ENCODE measurements at regions of chr12 and their contacts with region 1.

Region 1: GRCh38 chr12:93089805-93090569 is 160.9 kb upstream of the EEA1 start:
- DNase-seq: peak; percentile 50
- H3K4me3 ChIP-seq: no peak overlapping the region
- H3K27ac ChIP-seq: no peak overlapping the region
- H3K4me1 ChIP-seq: peaks cover 20% of the 10 kb centered on the region
- H3K27me3 ChIP-seq: no peaks in the 10 kb centered on the region
- CTCF ChIP-seq: no peak

Region 2: DNA sequence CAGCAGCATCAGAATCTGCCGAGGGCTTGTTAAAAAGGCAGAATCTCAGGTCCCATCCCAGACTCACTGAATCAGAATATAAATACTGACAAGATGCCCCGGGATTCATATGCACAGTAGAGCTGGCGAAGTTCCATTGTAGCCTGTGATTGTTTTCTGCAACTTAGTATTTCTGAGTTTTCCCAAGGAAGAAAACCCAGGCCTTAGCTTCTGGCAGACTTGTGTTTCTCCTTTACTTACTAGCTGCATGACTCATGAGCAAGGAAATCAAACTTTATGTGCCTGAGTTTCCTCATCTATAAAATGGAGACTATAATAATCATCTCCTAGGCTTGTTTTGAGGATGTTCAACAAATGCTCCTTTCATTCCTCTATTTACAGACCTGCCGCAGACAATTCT is 665.6 kb before region 1 on chr12:
- CTCF ChIA-PET with region 1: no interaction called
- POLR2A ChIA-PET with region 1: no interaction called
- intact Hi-C with region 1: no loop called
- DNase-seq: peak; percentile 47
- H3K4me3 ChIP-seq: no peak overlapping the region
- H3K27ac ChIP-seq: no peak overlapping the region
- H3K4me1 ChIP-seq: peaks cover 22% of the 10 kb centered on the region
- H3K27me3 ChIP-seq: no peaks in the 10 kb centered on the region
- CTCF ChIP-seq: no peak

Region 3: DNA sequence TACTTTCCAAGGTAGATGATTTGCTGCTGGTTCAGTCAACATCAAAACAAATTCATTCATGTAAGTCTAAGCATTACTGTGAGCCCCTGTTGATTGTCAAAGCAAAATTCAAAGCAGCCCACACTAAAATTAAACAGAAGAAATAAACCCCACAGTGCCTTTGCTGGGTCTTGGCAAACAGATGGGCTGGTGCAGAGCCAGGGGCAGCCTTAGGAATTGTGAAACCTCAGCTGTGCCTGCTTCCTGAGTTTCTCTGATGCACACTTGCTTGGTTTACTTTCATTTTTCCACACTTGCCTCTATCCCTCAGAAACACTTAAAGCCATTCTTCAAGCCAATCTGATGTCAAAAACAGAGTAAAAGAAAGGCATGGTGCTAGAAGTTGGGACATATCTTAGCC is 393.8 kb before region 1 on chr12:
- CTCF ChIA-PET with region 1: no interaction called
- POLR2A ChIA-PET with region 1: no interaction called
- intact Hi-C with region 1: no loop called
- DNase-seq: peak; percentile 9
- H3K4me3 ChIP-seq: no peak overlapping the region
- H3K27ac ChIP-seq: no peak overlapping the region
- H3K4me1 ChIP-seq: no peaks in the 10 kb centered on the region
- H3K27me3 ChIP-seq: no peaks in the 10 kb centered on the region
- CTCF ChIP-seq: no peak

Region 4: GRCh38 chr12:92943482-92944250 is 146.3 kb before region 1 on chr12:
- CTCF ChIA-PET with region 1: no interaction called
- POLR2A ChIA-PET with region 1: interaction called, 23 read pairs
- intact Hi-C with region 1: no loop called
- DNase-seq: no peak
- H3K4me3 ChIP-seq: no peak overlapping the region
- H3K27ac ChIP-seq: no peak overlapping the region
- H3K4me1 ChIP-seq: no peaks in the 10 kb centered on the region
- H3K27me3 ChIP-seq: no peaks in the 10 kb centered on the region
- CTCF ChIP-seq: 0 out of 2 replicates have a peak, but pooled peaks have one; percentile 15

Region 5: GRCh38 chr12:93072340-93072739 is 17.6 kb before region 1 on chr12:
- CTCF ChIA-PET with region 1: no interaction called
- POLR2A ChIA-PET with region 1: no interaction called
- intact Hi-C with region 1: no loop called
- DNase-seq: no peak
- H3K4me3 ChIP-seq: no peak overlapping the region
- H3K27ac ChIP-seq: no peak overlapping the region
- H3K4me1 ChIP-seq: no peaks in the 10 kb centered on the region
- H3K27me3 ChIP-seq: no peaks in the 10 kb centered on the region
- CTCF ChIP-seq: no peak

Region 6: DNA sequence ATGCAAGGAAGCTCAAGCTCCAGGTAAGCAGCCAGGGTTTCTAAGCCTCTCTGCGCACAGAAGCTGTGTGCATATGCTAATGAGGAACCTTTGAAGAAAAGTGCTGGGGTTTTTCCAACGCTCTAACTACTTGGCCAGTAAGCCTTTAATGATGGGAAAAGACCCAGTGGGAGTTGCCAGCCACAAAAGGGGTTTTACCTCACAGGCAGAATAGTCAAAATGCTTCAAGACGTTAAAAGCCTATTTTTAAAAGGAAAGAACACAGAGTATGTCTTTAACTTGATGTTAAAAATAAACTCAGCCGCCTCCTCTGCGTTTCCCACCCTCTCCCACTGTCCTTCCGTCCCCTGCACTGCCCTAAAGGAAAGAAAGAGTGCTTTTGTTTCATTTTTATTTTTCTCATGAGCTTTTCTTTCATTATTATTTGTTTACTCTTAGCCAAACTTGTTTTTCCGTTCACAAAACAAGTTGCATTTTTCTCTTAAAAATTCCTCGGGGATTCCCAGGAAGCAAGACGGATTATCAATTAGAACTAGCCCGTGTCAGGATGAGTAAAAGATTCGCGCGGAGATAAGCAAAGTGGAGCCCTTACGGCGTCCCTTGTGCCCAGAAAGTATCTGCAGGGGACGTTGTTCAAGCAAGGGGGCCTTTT is 78.0 kb after region 1 on chr12:
- CTCF ChIA-PET with region 1: no interaction called
- POLR2A ChIA-PET with region 1: no interaction called
- intact Hi-C with region 1: loop called (anchors 5 kb)
- DNase-seq: peak; percentile 89
- H3K4me3 ChIP-seq: peak overlapping the region; percentile 51
- H3K27ac ChIP-seq: peak overlapping the region; percentile 78
- H3K4me1 ChIP-seq: peaks cover 17% of the 10 kb centered on the region
- H3K27me3 ChIP-seq: no peaks in the 10 kb centered on the region
- CTCF ChIP-seq: no peak